ENCODE measurements at regions of chr3 and their contacts with region 1.

Region 1: GRCh38 chr3:68328049-68328448 is 604.3 kb downstream of the TAFA4 start:
- DNase-seq: no peak
- ATAC-seq: no peak
- H3K4me3 ChIP-seq: no peak overlapping the region
- H3K27ac ChIP-seq: no peak overlapping the region
- H3K4me1 ChIP-seq: no peaks in the 10 kb centered on the region
- H3K27me3 ChIP-seq: no peaks in the 10 kb centered on the region
- CTCF ChIP-seq: no peak
- POLR2A ChIP-seq: no peak
- RAD21 ChIP-seq: no peak

Region 2: DNA sequence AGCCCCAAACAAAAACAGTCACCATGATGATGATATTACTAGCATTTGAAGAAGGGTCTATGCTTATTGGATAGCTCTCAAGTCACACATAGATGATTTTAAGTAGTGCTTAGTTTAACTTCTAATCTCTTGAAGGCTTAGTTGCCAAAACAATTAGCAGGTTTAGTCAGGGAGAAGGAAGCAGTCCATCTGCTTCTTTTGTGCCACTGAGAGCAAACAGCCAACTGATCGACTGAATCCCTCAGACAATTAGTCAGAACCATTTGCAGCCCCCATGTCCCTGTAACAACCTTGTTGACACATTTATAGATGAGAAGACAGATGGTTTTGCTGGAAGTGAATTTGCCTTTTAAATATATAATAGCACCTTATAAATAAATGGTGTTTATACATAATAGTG is 88.5 kb before region 1 on chr3:
- CTCF ChIA-PET with region 1: no interaction called
- POLR2A ChIA-PET with region 1: no interaction called
- dilution Hi-C with region 1: no loop called
- in situ Hi-C with region 1: loop called (anchors 25 kb)
- intact Hi-C with region 1: no loop called
- DNase-seq: no peak
- ATAC-seq: no peak
- H3K4me3 ChIP-seq: no peak overlapping the region
- H3K27ac ChIP-seq: no peak overlapping the region
- H3K4me1 ChIP-seq: no peaks in the 10 kb centered on the region
- H3K27me3 ChIP-seq: no peaks in the 10 kb centered on the region
- CTCF ChIP-seq: no peak
- POLR2A ChIP-seq: no peak
- RAD21 ChIP-seq: no peak

Region 3: GRCh38 chr3:68880632-68881031 is 552.6 kb after region 1 on chr3:
- CTCF ChIA-PET with region 1: no interaction called
- POLR2A ChIA-PET with region 1: no interaction called
- dilution Hi-C with region 1: no loop called
- in situ Hi-C with region 1: no loop called
- intact Hi-C with region 1: no loop called
- DNase-seq: no peak
- ATAC-seq: no peak
- H3K4me3 ChIP-seq: no peak overlapping the region
- H3K27ac ChIP-seq: no peak overlapping the region
- H3K4me1 ChIP-seq: no peaks in the 10 kb centered on the region
- H3K27me3 ChIP-seq: peaks cover 4% of the 10 kb centered on the region; the same call in 1 of the 2 replicates
- CTCF ChIP-seq: no peak
- POLR2A ChIP-seq: no peak
- RAD21 ChIP-seq: no peak